ENCODE measurements at regions of chr1 and their contacts with region 1.

Region 1: DNA sequence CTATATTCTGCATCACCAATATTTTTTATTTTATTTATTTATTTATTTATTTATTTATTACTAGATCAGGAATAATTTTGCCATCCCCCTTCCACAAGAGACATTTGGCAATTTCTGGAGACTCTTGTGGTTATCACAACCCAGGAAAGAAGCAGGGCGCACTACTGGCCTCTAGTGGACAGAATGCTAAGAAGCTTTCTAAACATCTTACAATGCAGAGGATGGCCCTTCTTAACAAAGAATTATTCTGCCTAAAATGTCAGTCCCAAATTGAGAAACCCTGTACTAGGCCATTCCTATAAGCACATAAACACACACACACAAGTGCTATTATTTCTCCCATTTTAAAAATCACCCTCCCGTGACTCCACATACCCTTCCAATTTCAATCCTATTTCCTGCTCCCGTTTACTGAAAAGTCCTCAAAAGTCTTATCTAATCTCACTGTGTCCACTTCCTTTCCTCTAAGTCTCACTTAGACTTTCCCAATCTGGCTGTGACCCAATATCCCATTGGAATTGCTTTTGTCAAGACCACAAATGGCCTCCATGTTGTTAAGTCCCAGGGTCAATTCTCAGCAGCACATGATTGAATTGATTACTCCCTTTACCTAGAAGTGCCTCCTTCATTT is 43.7 kb upstream of the RNF11 start:
- DNase-seq: peak; percentile 65
- H3K4me3 ChIP-seq: no peak overlapping the region
- H3K27ac ChIP-seq: no peak overlapping the region
- H3K4me1 ChIP-seq: no peaks in the 10 kb centered on the region
- CTCF ChIP-seq: peak; percentile 91

Region 2: DNA sequence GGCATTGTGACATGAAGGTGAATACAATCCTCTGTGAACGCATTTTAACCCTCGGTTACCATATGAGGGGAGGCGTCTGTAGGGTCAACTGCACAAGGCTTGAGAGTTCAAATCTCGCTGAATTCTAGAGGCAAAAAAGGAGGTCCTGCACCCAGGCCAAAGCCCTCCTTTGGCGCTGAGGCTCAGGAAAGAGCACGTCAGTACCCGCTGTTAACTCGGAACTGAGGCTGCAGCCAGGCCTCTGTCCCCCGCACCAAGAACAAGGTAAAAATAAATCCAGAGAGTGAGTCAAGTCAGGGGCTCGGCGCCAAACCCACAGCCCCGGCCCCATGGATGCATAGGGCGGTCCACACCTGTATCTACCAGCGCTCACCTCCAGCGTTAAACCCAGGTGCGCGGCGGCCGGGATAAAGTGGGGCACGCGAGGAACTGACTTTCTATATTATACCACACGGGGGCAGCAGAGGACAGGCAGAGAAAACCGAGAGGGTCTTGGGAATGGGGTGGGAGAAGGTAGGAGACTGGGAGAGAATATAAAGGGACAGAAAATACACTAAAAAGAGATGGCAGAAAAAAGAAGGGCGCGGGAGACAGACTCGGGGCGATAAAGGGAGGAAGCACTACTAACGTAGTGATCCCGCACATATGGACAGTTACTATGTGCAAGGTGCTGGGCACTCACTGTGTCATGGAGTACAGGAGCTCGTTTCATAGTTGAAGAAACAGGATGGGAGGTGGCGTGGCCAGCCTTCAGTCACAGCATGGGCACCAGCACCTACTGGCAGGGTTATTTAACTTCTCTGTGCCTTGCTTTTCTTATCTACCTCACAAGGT is 823.9 kb before region 1 on chr1:
- CTCF ChIA-PET with region 1: no interaction called
- POLR2A ChIA-PET with region 1: no interaction called
- intact Hi-C with region 1: loop called (anchors 1 kb)
- DNase-seq: peak; percentile 25
- H3K4me3 ChIP-seq: no peak overlapping the region
- H3K27ac ChIP-seq: no peak overlapping the region
- H3K4me1 ChIP-seq: no peaks in the 10 kb centered on the region
- CTCF ChIP-seq: peak; percentile 80

Region 3: GRCh38 chr1:50774759-50775351 is 417.5 kb before region 1 on chr1:
- CTCF ChIA-PET with region 1: no interaction called
- POLR2A ChIA-PET with region 1: no interaction called
- intact Hi-C with region 1: loop called (anchors 5 kb)
- DNase-seq: peak; percentile 61
- H3K4me3 ChIP-seq: no peak overlapping the region
- H3K27ac ChIP-seq: no peak overlapping the region
- H3K4me1 ChIP-seq: no peaks in the 10 kb centered on the region
- CTCF ChIP-seq: peak; percentile 92

Region 4: DNA sequence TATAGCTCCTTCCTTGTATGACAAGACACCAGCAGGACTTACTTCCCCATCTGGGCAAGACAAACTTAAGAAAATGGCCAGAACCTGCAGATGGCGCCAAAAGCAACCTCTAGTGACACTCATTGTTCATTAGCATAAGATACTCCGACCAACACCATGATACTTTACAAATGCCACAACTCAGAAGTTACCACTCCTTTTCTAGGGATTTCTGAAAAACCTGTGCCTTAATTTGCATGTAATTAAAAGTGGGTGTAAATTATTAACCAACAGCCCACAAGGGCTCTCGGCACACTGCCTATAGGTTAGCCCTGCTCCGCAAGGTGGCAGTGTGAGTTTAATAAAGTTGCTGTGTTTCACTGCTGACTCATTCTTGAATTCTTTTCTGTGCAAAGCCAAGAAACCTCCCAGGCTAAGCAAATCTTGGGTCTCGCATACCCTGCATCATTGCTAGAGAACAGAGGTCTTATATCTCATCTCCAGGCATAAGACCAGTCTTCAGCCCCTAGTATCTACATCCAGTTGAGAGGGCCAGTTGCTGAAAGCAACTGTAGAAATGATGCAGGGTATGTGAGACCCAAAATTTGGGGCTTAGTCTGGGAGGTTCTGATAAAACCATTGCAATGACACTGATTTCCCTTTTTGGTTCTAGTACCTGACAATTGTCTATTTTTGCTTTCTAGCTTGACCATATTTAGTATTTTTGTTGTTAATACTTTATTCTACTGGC is 318.7 kb before region 1 on chr1:
- CTCF ChIA-PET with region 1: no interaction called
- POLR2A ChIA-PET with region 1: no interaction called
- intact Hi-C with region 1: loop called (anchors 2 kb)
- DNase-seq: peak; percentile 83
- H3K4me3 ChIP-seq: peak overlapping the region; percentile 48
- H3K27ac ChIP-seq: peak overlapping the region; percentile 8
- H3K4me1 ChIP-seq: peaks cover 14% of the 10 kb centered on the region
- CTCF ChIP-seq: peak; percentile 100

Region 5: DNA sequence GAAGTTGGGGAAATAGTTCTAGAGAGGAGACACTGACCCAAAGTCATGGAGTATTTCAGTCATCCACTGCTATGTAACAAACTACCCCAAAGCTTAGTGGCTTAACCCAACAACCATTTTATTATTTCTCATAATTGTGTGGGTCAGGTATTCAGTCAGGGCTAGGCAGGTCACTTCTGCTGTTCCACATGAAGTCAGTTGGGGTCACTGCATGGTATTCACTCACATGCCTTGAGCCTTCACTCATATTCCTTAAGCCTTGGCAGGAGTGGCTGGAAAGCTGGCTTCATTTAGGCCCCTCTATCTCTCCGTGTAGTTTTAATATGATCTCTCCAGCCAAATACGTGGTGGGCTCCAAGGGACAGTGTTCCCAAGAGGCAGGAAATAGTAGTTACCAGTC is 26.2 kb after region 1 on chr1:
- CTCF ChIA-PET with region 1: no interaction called
- POLR2A ChIA-PET with region 1: no interaction called
- intact Hi-C with region 1: no loop called
- DNase-seq: no peak
- H3K4me3 ChIP-seq: no peak overlapping the region
- H3K27ac ChIP-seq: no peak overlapping the region
- H3K4me1 ChIP-seq: no peaks in the 10 kb centered on the region
- CTCF ChIP-seq: 0 out of 2 replicates have a peak, but pooled peaks have one; percentile 13

Region 6: DNA sequence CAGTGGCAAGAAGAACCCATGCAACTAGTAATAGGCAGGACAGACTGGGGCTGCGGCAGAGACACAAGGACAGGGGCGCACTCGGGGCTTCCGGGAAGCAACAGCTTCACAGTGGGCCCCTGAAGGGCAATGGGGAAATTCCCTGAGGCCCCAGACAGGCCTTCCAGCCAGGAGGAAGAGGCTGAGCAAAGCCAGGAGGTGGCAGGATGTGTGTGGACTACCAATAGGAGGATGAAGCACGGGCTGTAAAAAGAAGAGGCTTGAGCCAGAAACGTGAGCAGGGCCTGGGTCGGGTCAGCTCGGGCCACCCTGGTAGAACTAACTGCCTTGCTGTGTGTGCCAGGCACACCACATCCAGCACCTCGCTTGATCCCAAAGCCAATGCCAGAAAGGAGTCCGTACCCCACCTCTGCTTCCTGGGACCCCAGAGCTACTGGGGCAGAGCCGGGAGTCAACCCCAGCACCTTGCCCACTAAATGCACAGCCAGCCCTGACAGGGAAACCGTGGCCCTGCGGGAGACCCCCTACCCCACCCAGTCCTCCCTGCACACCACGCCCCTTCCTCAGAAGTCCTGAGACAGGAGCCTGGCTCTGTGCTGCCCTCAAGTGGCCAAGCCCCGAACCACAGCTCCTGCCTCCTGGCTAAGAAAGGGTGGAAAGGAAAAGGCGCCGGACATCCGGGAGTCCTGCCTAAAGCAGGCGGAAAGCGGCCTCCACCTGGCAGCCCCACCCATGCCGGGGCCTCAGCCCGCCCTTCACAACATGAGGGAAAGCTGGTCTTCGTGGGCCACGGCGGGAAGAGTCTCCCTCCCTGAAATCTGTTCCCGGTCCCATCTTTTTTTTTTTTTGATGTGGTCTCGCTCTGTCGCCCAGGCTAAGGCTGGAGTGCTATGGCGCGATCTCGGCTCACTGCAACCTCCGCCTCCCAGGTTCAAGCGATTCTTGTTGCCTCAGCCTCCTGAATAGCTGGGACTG is 104.3 kb after region 1 on chr1:
- CTCF ChIA-PET with region 1: no interaction called
- POLR2A ChIA-PET with region 1: no interaction called
- intact Hi-C with region 1: loop called (anchors 10 kb)
- DNase-seq: peak; percentile 74
- H3K4me3 ChIP-seq: peak overlapping the region; percentile 40
- H3K27ac ChIP-seq: no peak overlapping the region
- H3K4me1 ChIP-seq: peaks cover 4% of the 10 kb centered on the region
- CTCF ChIP-seq: peak; percentile 91

Region 7: DNA sequence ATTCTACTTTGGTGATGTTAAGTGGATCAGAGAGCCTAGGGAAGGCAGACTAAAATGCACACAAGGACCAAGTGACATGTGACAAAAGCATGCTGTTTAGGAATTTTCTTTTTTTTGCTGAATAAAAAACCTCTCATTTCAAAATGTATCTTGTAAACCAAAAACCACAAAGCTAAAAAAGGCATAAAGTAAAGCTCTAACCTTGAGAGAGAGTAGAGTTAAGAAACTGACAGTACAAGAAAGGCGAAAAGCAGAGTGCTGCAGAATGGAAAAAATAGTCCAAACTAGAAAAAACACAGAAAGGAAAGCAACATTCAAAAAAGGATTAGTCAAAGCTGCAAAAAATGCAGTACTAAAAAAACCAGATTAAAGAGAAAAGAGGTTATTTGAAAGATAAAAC is 250.3 kb after region 1 on chr1:
- CTCF ChIA-PET with region 1: no interaction called
- POLR2A ChIA-PET with region 1: no interaction called
- intact Hi-C with region 1: no loop called
- DNase-seq: no peak
- H3K4me3 ChIP-seq: no peak overlapping the region
- H3K27ac ChIP-seq: no peak overlapping the region
- H3K4me1 ChIP-seq: no peaks in the 10 kb centered on the region
- CTCF ChIP-seq: no peak

Region 8: DNA sequence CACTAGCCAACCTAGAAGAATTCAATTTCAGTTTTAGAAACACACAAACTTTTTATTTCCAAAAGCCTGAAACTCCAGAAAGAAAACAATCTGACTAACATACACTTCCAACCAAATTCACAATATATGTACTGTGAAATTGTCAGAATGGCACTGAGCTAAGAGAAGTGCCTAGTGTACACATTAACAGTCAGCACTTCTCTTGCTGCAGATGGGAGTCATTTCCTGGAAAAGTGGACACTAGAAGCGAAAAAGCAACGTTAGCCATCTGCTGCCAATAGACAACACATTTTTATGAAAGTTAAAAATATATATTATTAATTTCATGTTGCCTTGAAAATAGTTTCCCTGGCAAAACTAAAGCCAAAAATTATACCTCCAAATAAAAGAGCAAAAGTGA is 260.7 kb after region 1 on chr1:
- CTCF ChIA-PET with region 1: no interaction called
- POLR2A ChIA-PET with region 1: no interaction called
- intact Hi-C with region 1: no loop called
- DNase-seq: no peak
- H3K4me3 ChIP-seq: no peak overlapping the region
- H3K27ac ChIP-seq: no peak overlapping the region
- H3K4me1 ChIP-seq: no peaks in the 10 kb centered on the region
- CTCF ChIP-seq: no peak